Lower lobe of right lung (tissue), 2 donors: ENCODE measurements at regions of chr18 and their contacts with region 1.

Region 1: DNA sequence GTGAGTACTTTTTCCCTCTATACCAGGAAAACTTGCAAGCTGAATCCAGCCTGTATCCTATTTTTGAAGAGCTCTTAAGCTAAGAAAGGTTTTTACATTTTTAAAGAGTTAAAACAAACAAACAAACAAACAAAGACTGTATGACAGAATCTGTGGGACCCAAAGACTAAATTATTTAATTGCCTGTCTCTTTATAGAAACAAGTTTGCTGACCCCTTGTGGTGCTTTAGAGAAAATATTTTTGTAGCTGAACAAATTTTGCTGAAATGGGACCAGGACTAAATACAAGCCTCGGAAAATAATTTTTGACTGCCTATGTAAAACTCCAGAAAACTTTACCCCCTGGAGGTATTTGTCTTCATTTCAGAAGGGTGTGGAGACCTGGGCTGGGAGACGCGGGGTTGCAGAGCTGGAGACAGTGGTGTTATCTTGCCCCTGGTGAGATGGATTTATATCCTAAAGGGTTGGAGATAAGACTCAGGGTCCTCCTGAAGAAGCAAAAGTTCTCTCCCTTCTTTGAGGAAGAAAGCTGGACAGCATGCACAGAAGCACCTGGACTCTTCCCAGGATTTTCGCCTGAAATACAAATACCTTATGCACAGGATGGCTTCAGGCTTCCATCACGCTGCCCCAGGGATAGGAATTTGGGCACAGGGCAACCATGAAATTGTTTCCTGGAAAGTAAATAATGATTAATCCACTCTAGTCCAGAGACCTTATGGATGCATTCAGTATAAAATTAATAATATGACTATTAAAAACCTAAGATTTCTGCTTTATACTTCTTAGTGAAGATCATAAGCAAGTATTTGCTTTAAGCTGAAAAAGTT is 54.3 kb downstream of the TMX3 start:
- DNase-seq: no peak
- ATAC-seq: no peak
- H3K4me3 ChIP-seq: no peak overlapping the region
- H3K27ac ChIP-seq: no peak overlapping the region
- H3K4me1 ChIP-seq: no peaks in the 10 kb centered on the region
- H3K27me3 ChIP-seq: no peaks in the 10 kb centered on the region
- CTCF ChIP-seq: peak; percentile 53

Region 2: DNA sequence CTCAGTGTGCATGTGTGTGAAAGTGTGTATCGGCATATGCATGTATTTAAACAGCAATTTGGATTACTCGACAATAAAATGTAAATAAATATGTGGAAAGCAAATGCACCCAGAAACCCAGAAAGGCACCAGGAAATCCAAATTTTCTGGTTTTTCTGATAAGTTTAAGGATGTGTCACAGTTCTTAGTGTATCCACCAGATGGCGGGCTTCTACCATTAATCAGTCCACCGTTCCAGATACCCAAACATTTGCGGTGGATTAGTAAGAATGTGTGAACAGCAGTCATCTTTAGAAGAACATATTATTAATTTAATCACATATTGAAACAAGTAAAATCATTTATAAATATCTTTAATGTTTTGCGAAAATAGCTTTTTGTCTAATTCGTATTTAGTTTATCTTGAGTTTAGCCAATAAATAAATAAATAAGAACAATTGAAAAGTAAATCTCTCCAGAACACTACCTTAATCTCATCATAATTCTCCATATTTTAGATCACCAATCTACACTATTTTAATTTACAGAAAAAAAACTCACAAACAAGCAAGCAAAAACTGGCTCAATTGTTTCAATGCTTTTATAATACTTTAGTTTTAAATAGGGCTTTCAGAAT is 1442.9 kb before region 1 on chr18:
- intact Hi-C with region 1: loop called (anchors 10 kb)
- DNase-seq: no peak
- ATAC-seq: peak; percentile 69 to 81
- H3K4me3 ChIP-seq: no peak overlapping the region
- H3K27ac ChIP-seq: no peak overlapping the region
- H3K4me1 ChIP-seq: no peaks in the 10 kb centered on the region
- H3K27me3 ChIP-seq: no peaks in the 10 kb centered on the region
- CTCF ChIP-seq: peak; percentile 83

Region 3: GRCh38 chr18:68316636-68317035 is 343.9 kb before region 1 on chr18:
- intact Hi-C with region 1: no loop called
- DNase-seq: no peak
- ATAC-seq: no peak
- H3K4me3 ChIP-seq: no peak overlapping the region
- H3K27ac ChIP-seq: no peak overlapping the region
- H3K4me1 ChIP-seq: no peaks in the 10 kb centered on the region
- H3K27me3 ChIP-seq: no peaks in the 10 kb centered on the region
- CTCF ChIP-seq: no peak

Region 4: GRCh38 chr18:68467957-68468356 is 192.6 kb before region 1 on chr18:
- intact Hi-C with region 1: no loop called
- DNase-seq: no peak
- ATAC-seq: no peak
- H3K4me3 ChIP-seq: no peak overlapping the region
- H3K27ac ChIP-seq: no peak overlapping the region
- H3K4me1 ChIP-seq: no peaks in the 10 kb centered on the region
- H3K27me3 ChIP-seq: no peaks in the 10 kb centered on the region
- CTCF ChIP-seq: no peak